Posterior vena cava (tissue), 2 donors: ENCODE measurements at regions of chr2 and their contacts with region 1.

Region 1: DNA sequence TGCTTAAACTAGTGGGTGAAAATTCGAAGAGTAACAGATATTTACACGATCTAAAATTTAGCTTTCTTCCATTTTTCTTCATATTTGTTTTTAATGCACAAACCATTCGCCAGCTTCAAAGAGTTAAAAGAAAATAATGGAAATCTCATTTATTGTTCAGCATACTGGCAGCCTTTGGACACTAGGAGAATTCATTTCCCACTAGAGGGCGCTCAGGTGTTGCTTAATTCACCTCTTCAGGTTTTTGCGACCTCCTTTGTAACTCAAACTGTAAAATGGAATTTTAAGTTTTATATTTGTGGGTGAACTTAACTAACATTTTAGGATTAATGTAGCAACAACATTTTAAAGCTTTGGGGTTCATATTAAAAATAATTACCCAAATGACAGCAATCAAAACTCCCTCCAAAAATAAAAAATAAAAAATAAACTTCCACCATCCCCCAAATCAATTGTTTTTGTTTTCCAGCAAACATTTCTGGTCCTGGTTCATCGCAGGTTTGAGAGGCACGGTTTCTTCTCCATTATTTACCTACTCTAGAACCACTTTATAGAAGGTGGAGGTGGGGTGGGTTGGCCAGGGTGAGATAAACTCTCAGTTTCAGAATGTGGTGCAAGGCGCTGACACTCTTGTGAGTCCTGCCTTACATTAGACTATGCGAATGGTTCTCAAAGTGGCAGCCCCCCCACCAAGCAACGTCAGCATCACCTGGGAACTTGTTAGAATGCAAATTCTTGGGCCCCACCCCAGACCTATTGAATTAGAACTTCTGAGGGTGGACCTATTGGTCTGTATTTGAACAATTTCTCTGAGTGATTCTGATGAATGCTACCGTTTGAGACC is 24.7 kb upstream of the PNPT1 start:
- DNase-seq: no peak

Region 2: GRCh38 chr2:55693181-55694134 is 24.9 kb before region 1 on chr2 and contains the start of gene PNPT1:
- intact Hi-C with region 1: no loop called
- DNase-seq: peak; percentile 98
- total RNA-seq, gene PNPT1: 20.4 to 23.9 TPM

Region 3: DNA sequence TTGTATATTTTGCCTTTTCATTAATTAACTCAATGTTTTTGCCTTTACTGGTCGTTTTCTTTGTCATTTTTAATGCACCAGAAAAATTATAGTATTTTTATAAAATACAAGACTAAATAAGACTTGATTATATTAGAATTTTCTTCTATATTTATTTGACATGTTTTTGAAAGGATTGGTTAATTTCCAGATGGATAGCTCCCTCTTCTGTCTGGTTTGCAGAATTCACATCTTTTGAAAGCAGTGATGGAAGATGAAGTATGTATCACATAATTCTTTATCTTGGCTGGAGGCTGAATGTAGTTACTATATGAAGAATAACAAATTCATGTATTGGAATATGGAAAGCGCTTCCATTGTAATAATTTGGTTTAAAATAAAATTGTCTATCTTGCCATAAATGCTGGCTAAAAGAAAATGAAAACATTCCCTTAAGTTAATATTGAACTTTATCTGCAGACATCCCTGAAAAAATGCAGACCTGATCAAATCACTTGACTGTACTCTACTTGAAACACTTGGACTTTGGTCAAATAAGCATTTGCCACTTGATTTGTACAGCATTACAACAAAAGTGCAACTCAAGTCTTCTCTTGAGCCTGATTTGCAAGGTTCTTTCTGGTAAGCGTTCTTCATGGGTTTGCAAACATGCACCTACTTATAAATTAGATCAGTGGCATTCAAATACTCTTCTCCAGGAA is 291.5 kb after region 1 on chr2:
- intact Hi-C with region 1: loop called (anchors 5 to 10 kb)
- DNase-seq: no peak

Region 4: DNA sequence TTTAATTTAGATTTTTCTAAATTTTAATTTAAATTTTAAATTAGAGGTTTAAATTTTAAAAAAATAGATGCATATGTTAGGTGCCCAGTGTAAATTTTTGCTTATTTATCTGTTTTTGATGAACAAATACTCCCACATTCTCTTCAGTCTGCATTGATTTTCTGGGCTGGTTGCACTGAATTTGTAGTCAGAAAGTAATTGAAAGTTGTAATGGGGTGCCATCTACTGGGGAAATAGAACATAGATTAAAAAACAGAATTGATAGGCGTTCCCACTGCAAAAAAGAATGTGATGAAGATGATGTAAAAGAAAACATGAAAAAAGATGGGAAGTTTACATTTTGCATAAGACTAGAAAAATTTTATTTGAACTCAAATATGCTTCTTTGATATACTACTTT is 413.8 kb after region 1 on chr2:
- intact Hi-C with region 1: loop called (anchors 5 to 10 kb)
- DNase-seq: no peak

Region 5: GRCh38 chr2:56209701-56210100 is 491.3 kb after region 1 on chr2:
- intact Hi-C with region 1: no loop called
- DNase-seq: no peak